CD4-positive, alpha-beta T cell (primary cell): ENCODE measurements at regions of chr12 and their contacts with region 1.

Region 1: GRCh38 chr12:105053116-105053572 is 31.1 kb downstream of the ALDH1L2 start:
- DNase-seq: peak; percentile 63 to 85 (median 68)
- ATAC-seq: peak; percentile 94
- H3K4me3 ChIP-seq: no peak overlapping the region
- H3K4me3 Mint-ChIP-seq: no peak overlapping the region
- H3K27ac ChIP-seq: no peak overlapping the region
- H3K27ac Mint-ChIP-seq: no peak overlapping the region
- H3K4me1 ChIP-seq: no peaks in the 10 kb centered on the region
- H3K4me1 Mint-ChIP-seq: no peaks in the 10 kb centered on the region
- H3K27me3 ChIP-seq: no peaks in the 10 kb centered on the region
- H3K27me3 Mint-ChIP-seq: no peaks in the 10 kb centered on the region
- CTCF ChIP-seq: peak; percentile 95

Region 2: GRCh38 chr12:104201238-104202001 is 851.7 kb before region 1 on chr12:
- CTCF ChIA-PET with region 1: interaction called, 3 read pairs
- POLR2A ChIA-PET with region 1: no interaction called
- intact Hi-C with region 1: loop called (anchors 1 kb)
- DNase-seq: peak; percentile 16 to 82 (median 34)
- ATAC-seq: peak; percentile 82
- H3K4me3 ChIP-seq: no peak overlapping the region
- H3K4me3 Mint-ChIP-seq: no peak overlapping the region
- H3K27ac ChIP-seq: no peak overlapping the region
- H3K27ac Mint-ChIP-seq: no peak overlapping the region
- H3K4me1 ChIP-seq: no peaks in the 10 kb centered on the region
- H3K4me1 Mint-ChIP-seq: no peaks in the 10 kb centered on the region
- H3K27me3 ChIP-seq: peaks cover 0 to 5% of the 10 kb centered on the region in 2 experiments
- H3K27me3 Mint-ChIP-seq: peaks cover 5% of the 10 kb centered on the region
- CTCF ChIP-seq: peak; percentile 85

Region 3: DNA sequence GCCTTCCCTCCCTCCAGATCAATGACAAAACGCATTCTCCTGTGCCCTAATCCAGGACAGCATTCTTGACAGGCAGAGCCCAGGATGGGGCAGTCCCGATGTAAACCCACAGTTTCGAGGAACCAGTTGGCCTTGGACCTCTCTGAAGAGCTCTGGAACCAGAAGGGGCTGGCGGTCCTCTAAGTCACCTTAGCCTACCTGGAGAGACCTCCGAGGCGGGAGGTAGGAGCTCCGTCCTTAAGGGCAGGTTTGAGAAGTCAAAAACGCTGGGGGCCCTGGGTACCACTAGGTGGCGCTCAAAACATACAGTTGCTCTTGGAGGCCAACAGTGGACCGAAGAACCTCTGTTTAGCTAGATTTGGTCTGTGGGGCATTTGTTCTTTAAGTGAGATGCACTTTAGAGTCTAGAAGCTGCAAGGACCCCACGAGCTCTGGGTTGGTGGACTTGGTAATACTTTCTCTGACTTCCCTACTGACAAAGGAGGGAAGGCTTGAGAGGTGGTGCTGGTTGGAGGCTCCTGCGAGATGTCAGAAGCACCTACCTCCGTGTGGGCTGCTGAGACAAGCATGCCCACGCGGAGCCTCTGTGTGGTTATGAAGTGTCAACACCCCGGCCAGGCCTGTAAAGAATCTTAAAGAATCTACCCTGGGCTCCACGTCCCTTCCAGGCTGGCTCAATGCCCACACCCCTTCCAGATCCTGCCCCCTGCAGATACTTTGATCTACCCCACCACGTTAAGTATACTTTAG is 671.2 kb before region 1 on chr12:
- CTCF ChIA-PET with region 1: interaction called, 34 read pairs
- POLR2A ChIA-PET with region 1: interaction called, 5 read pairs
- intact Hi-C with region 1: loop called (anchors 1 kb)
- DNase-seq: peak; percentile 67 to 89 (median 78)
- ATAC-seq: peak; percentile 89
- H3K4me3 ChIP-seq: no peak overlapping the region
- H3K4me3 Mint-ChIP-seq: no peak overlapping the region
- H3K27ac ChIP-seq: no peak overlapping the region
- H3K27ac Mint-ChIP-seq: no peak overlapping the region
- H3K4me1 ChIP-seq: peaks cover 9% of the 10 kb centered on the region
- H3K4me1 Mint-ChIP-seq: peaks cover 10% of the 10 kb centered on the region
- H3K27me3 ChIP-seq: no peaks in the 10 kb centered on the region
- H3K27me3 Mint-ChIP-seq: peaks cover 6% of the 10 kb centered on the region
- CTCF ChIP-seq: peak; percentile 91

Region 4: DNA sequence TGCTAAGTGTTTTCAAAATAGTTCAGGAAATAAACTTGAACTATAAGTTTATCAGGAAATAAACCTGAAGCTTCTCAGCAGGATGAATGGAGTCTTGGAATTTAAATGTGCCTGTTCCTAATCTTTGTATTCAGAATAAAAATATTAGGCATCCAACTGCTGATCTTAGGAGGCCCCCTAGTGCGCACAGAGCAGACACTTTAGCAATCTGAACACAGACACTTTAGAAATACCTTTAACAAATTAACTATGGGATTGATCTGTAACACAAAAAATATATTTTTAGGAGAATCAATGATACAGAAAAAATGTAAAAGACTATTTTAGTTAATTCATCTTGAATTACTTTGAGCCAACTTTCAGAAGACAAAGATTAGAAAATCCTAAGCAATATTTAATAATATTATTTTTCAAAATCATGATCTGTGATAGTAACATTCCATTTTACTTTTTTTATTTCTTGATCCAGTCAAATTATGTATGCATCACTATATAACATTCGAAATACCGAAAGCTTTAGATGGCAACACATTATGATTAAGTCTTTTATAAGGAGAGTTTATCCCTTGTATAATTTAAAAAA is 175.9 kb before region 1 on chr12:
- CTCF ChIA-PET with region 1: no interaction called
- POLR2A ChIA-PET with region 1: no interaction called
- intact Hi-C with region 1: loop called (anchors 2 kb)
- DNase-seq: peak; percentile 14 to 61 (median 27)
- ATAC-seq: peak; percentile 56
- H3K4me3 ChIP-seq: no peak overlapping the region
- H3K4me3 Mint-ChIP-seq: no peak overlapping the region
- H3K27ac ChIP-seq: no peak overlapping the region
- H3K27ac Mint-ChIP-seq: no peak overlapping the region
- H3K4me1 ChIP-seq: no peaks in the 10 kb centered on the region
- H3K4me1 Mint-ChIP-seq: no peaks in the 10 kb centered on the region
- H3K27me3 ChIP-seq: no peaks in the 10 kb centered on the region
- H3K27me3 Mint-ChIP-seq: no peaks in the 10 kb centered on the region
- CTCF ChIP-seq: peak; percentile 86

Region 5: GRCh38 chr12:104986022-104986941 is 66.9 kb before region 1 on chr12 and contains the start of gene NOPCHAP1:
- CTCF ChIA-PET with region 1: no interaction called
- POLR2A ChIA-PET with region 1: no interaction called
- intact Hi-C with region 1: loop called in 1 of 2 experiments (anchors 5 kb)
- DNase-seq: peak; percentile 62 to 89 (median 80)
- ATAC-seq: peak; percentile 99
- H3K4me3 ChIP-seq: peak within 1 kb of the TSS; percentile 73
- H3K4me3 Mint-ChIP-seq: peak within 1 kb of the TSS; percentile 97
- H3K27ac ChIP-seq: no peak within 1 kb of the TSS
- H3K27ac Mint-ChIP-seq: peak within 1 kb of the TSS; percentile 68
- H3K4me1 ChIP-seq: peaks cover 21% of the 10 kb centered on the region
- H3K4me1 Mint-ChIP-seq: peaks cover 39% of the 10 kb centered on the region
- H3K27me3 ChIP-seq: no peaks in the 10 kb centered on the region
- H3K27me3 Mint-ChIP-seq: peaks cover 4% of the 10 kb centered on the region
- CTCF ChIP-seq: no peak
- total RNA-seq, gene NOPCHAP1: 10.1 to 11.8 TPM

Region 6: DNA sequence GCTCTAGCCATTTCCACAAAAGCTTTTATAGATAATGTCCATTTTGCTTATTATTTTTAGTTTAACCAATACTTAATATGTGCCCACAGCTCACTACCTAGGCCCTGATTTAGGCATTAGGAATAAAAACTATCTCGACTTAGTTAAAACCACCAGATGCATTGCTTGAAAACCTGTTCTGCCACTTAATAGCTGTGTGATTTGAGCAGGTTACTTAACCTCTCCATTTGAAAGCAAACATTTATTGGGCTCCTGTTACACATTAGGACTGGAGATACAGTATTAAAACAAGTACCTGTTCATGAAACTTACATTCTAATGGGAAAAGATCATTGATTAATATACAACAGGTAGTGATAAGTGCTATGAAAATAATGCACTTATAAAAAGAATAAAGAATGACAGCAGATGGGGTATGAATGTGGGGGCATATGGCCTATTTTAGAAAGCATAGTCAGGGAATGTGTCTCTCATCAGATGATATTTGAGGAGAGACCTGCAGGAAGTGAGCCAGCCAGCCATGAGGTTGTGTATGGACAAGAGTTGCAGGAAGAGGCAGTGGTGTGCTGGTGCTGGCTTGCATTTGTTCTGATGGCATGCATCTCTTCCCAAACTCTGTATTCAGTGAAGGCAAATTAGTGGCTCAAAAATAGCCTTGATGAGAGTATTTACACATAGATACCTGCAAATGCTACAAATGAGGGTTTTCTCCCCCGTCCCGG is 32.7 kb before region 1 on chr12:
- CTCF ChIA-PET with region 1: no interaction called
- POLR2A ChIA-PET with region 1: no interaction called
- intact Hi-C with region 1: no loop called
- DNase-seq: no peak
- ATAC-seq: no peak
- H3K4me3 ChIP-seq: no peak overlapping the region
- H3K4me3 Mint-ChIP-seq: no peak overlapping the region
- H3K27ac ChIP-seq: no peak overlapping the region
- H3K27ac Mint-ChIP-seq: no peak overlapping the region
- H3K4me1 ChIP-seq: no peaks in the 10 kb centered on the region
- H3K4me1 Mint-ChIP-seq: no peaks in the 10 kb centered on the region
- H3K27me3 ChIP-seq: no peaks in the 10 kb centered on the region
- H3K27me3 Mint-ChIP-seq: no peaks in the 10 kb centered on the region
- CTCF ChIP-seq: no peak